Natural killer cell (primary cell): ENCODE measurements at regions of chr5 and their contacts with region 1.

Region 1: GRCh38 chr5:113378959-113379541 is 55.7 kb downstream of the TSSK1B start:
- DNase-seq: peak; percentile 19 to 75
- ATAC-seq: peak in 2 of 3 donors; percentile 72 to 80
- H3K4me3 ChIP-seq: no peak overlapping the region
- H3K4me3 Mint-ChIP-seq: peak overlapping the region; percentile 17
- H3K27ac ChIP-seq: no peak overlapping the region
- H3K27ac Mint-ChIP-seq: no peak overlapping the region
- H3K4me1 ChIP-seq: peaks cover 11% of the 10 kb centered on the region
- H3K4me1 Mint-ChIP-seq: peaks cover 15 to 18% of the 10 kb centered on the region in 2 donors
- H3K27me3 ChIP-seq: peaks cover 10% of the 10 kb centered on the region
- H3K27me3 Mint-ChIP-seq: peaks cover 26 to 41% of the 10 kb centered on the region in 2 donors
- CTCF ChIP-seq: peak; percentile 83

Region 2: DNA sequence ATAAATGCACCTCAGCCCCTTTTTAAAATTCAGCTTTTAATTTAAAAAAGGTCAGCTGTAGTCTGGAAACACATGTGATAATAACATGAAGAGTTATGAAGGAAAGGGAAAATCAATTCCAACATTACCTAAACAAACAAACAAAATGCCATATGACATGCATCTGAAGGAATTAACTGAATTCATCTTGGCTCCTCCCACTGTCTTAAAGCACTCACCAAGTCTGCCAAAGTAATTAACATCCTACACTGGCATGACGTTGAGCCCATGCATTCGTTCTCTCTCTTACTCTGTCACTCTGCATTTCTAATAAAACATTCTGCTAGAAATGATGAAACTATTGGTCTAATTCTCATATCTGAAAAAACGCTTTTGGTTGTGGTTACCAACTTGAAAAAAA is 18.0 kb after region 1 on chr5:
- intact Hi-C with region 1: no loop called
- DNase-seq: no peak
- ATAC-seq: no peak
- H3K4me3 ChIP-seq: no peak overlapping the region
- H3K4me3 Mint-ChIP-seq: no peak overlapping the region
- H3K27ac ChIP-seq: no peak overlapping the region
- H3K27ac Mint-ChIP-seq: no peak overlapping the region
- H3K4me1 ChIP-seq: no peaks in the 10 kb centered on the region
- H3K4me1 Mint-ChIP-seq: no peaks in the 10 kb centered on the region
- H3K27me3 ChIP-seq: peaks cover 4% of the 10 kb centered on the region
- H3K27me3 Mint-ChIP-seq: peaks cover 12 to 28% of the 10 kb centered on the region in 2 donors
- CTCF ChIP-seq: no peak

Region 3: DNA sequence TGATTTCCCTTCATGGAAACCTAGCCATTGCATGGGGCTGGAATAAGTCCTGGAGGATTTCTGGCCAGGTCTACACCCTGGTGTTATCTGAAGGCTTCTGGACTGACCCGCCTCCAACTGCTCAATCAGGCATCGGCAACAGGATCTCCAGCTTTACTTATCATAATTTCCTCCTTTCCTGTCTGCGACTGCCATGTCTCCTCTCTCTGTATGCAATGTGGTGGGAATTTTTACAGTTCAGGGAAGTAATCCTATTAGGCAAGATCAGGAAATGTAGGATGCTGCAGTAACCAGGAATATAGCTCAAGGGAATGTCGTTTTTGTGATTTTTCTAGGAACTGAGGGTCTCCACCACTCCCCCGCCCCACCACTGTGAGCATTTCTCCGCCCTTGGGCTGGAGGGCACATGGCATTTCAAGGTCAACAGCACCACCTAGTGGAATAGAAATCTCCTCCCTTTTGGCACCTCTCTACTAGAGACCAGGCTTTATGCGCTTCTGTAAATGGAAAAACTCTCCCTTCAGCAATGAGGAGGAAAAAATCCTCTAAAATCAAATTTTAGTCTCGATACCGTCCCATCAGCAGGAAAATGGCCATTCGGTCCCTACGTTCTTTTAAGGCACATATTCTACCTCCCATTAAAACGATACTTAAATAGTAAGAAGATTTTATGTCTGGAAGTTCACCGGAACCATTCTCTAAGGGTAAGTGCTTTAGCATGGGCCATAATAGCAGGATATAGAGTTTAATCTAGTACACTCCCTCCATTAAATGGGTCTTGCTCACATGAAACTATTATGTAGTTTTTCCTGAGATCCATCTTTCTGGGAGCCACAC is 227.5 kb after region 1 on chr5:
- intact Hi-C with region 1: loop called (anchors 5 kb)
- DNase-seq: peak in 1 of 2 donors; percentile 79
- ATAC-seq: peak; percentile 55 to 81 (median 63)
- H3K4me3 ChIP-seq: no peak overlapping the region
- H3K4me3 Mint-ChIP-seq: no peak overlapping the region
- H3K27ac ChIP-seq: no peak overlapping the region
- H3K27ac Mint-ChIP-seq: no peak overlapping the region
- H3K4me1 ChIP-seq: no peaks in the 10 kb centered on the region
- H3K4me1 Mint-ChIP-seq: no peaks in the 10 kb centered on the region
- H3K27me3 ChIP-seq: peaks cover 23% of the 10 kb centered on the region
- H3K27me3 Mint-ChIP-seq: peaks cover 21 to 38% of the 10 kb centered on the region in 2 donors
- CTCF ChIP-seq: peak; percentile 63

Region 4: GRCh38 chr5:113965225-113965624 is 586.2 kb after region 1 on chr5:
- intact Hi-C with region 1: no loop called
- DNase-seq: no peak
- ATAC-seq: no peak
- H3K4me3 ChIP-seq: no peak overlapping the region
- H3K4me3 Mint-ChIP-seq: no peak overlapping the region
- H3K27ac ChIP-seq: no peak overlapping the region
- H3K27ac Mint-ChIP-seq: no peak overlapping the region
- H3K4me1 ChIP-seq: no peaks in the 10 kb centered on the region
- H3K4me1 Mint-ChIP-seq: no peaks in the 10 kb centered on the region
- H3K27me3 ChIP-seq: no peaks in the 10 kb centered on the region
- H3K27me3 Mint-ChIP-seq: no peaks in the 10 kb centered on the region
- CTCF ChIP-seq: no peak